ENCODE measurements at regions of chr6 and their contacts with region 1.

Region 1: GRCh38 chr6:116561377-116562018 is 7.9 kb downstream of the CALHM4 start:
- DNase-seq: peak; percentile 70
- H3K4me3 ChIP-seq: no peak overlapping the region
- H3K27ac ChIP-seq: no peak overlapping the region
- H3K4me1 ChIP-seq: no peaks in the 10 kb centered on the region
- H3K27me3 ChIP-seq: no peaks in the 10 kb centered on the region
- CTCF ChIP-seq: peak; percentile 83 to 91 (median 86)
- POLR2A ChIP-seq: no peak

Region 2: DNA sequence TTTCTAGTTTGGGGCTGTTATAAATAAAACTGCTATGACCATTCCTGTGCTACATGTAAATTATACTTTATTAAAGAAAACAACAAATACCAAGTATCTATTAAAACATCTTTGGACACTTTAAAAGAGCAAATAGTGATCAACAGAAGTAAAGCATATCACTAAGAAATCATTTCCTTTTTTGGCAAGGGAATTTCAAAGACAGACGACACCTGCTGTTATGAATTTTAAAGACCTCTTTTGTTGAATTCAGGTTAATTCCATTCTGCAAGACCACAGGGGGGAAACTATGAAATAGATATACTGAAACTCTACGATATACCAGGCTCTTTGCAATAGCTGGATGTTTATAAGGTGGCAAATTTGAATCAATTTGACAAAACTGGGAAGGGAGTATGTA is 289.3 kb before region 1 on chr6:
- intact Hi-C with region 1: loop called (anchors 5 kb)
- DNase-seq: no peak
- H3K4me3 ChIP-seq: no peak overlapping the region
- H3K27ac ChIP-seq: no peak overlapping the region
- H3K4me1 ChIP-seq: no peaks in the 10 kb centered on the region
- H3K27me3 ChIP-seq: no peaks in the 10 kb centered on the region
- CTCF ChIP-seq: no peak
- POLR2A ChIP-seq: no peak

Region 3: DNA sequence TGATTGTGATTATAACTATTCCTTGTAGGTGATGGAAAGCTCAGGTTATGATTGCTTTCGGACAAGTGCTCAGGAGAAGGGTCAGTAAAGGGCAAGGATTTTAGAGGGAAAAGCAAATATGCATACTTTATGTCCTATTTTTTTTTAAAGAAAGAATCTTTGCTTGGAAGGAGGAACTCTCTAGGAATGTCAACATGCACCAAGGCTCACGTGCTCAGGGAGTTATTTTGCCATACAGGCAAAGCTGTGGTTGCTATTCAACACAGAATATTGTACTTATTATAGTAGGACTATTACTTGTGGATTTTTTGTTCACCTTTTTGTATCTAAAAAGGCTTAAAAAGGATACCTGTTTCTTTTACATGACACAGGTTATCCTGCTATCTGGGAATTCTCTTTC is 278.8 kb before region 1 on chr6:
- intact Hi-C with region 1: no loop called
- DNase-seq: no peak
- H3K4me3 ChIP-seq: no peak overlapping the region
- H3K27ac ChIP-seq: no peak overlapping the region
- H3K4me1 ChIP-seq: peaks cover 7% of the 10 kb centered on the region
- H3K27me3 ChIP-seq: no peaks in the 10 kb centered on the region
- CTCF ChIP-seq: no peak
- POLR2A ChIP-seq: no peak

Region 4: DNA sequence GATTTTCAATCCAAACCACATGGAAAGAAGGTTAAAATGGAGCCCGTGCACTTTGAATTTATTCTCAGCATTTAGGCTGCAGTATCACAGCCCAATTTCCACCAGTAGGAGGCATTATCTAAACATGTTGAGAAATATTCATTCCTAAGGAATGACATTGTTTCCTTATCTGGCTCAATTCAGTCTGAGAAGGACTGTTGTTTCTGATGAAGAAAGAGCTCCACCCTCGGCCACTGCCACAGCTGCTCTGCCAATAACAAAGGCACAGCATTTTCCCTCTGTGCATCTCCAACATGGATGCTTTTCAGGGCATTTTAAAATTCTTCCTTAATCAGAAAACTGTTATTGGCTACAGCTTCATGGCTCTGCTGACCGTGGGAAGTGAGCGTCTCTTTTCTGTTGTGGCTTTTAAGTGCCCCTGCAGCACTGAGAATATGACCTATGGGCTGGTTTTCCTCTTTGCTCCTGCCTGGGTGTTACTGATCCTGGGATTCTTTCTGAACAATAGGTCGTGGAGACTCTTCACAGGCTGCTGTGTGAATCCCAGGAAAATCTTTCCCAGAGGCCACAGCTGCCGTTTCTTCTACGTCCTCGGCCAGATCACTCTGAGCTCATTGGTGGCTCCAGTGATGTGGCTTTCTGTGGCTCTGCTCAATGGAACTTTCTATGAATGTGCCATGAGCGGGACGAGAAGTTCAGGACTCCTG is 49.9 kb before region 1 on chr6 and contains the start of gene CALHM5:
- intact Hi-C with region 1: loop called (anchors 10 kb)
- DNase-seq: no peak
- H3K4me3 ChIP-seq: peak within 1 kb of the TSS; percentile 11 to 18
- H3K27ac ChIP-seq: peak within 1 kb of the TSS; percentile 51 to 67
- H3K4me1 ChIP-seq: no peaks in the 10 kb centered on the region
- H3K27me3 ChIP-seq: no peaks in the 10 kb centered on the region
- CTCF ChIP-seq: peak in 3 of 4 experiments; percentile 28 to 38 (median 36)
- POLR2A ChIP-seq: no peak
- total RNA-seq, gene CALHM5: 0.32 to 1.8 TPM

Region 5: DNA sequence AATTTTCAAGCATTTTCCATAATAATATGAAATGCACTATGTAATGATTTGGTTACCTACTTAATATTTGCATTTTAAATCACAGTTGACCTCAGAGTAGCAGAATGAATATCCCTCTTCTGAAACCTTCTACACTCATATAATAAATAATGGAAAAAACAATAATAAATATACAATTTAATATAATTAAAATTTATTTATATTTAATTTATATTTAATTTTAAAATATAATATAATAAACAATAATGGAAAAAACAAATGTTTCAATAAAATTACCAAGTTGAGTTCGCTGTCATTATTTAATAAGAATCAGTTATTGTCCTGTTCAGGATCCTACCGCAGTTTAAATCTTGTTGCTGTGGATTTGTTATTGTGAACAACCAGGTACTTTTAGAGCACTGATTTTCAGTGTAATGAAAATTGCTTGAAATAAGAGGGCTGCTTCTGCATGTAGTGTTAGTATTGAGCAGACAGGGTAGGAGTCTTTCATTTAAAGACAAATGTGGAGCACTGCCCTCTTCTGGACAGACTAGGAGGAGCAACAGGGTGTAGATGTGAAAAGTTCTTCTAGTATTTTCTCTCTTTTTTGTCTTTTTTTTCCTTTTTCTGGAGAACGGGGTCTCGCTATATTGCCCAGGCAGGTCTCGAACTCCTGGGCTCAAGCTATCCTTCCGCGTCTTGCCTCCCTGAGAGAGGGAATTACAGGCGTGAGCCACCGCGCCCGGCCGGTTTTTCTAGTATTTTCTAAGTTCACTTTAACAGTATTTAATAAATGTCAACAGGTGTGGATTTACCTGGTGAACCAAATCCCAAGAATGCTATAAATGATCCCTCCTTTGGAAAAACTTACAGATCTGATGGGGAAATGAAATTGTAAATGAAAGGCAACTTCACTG is 29.6 kb before region 1 on chr6:
- intact Hi-C with region 1: loop called (anchors 2 kb)
- DNase-seq: peak; percentile 13
- H3K4me3 ChIP-seq: no peak overlapping the region
- H3K27ac ChIP-seq: no peak overlapping the region
- H3K4me1 ChIP-seq: no peaks in the 10 kb centered on the region
- H3K27me3 ChIP-seq: no peaks in the 10 kb centered on the region
- CTCF ChIP-seq: peak; percentile 31 to 65 (median 52)
- POLR2A ChIP-seq: no peak

Region 6: GRCh38 chr6:116662202-116662601 is 100.7 kb after region 1 on chr6:
- intact Hi-C with region 1: no loop called
- DNase-seq: no peak
- H3K4me3 ChIP-seq: no peak overlapping the region
- H3K27ac ChIP-seq: no peak overlapping the region
- H3K4me1 ChIP-seq: no peaks in the 10 kb centered on the region
- H3K27me3 ChIP-seq: no peaks in the 10 kb centered on the region
- CTCF ChIP-seq: no peak
- POLR2A ChIP-seq: no peak

Region 7: GRCh38 chr6:116797585-116797984 is 236.1 kb after region 1 on chr6:
- intact Hi-C with region 1: no loop called
- DNase-seq: no peak
- H3K4me3 ChIP-seq: no peak overlapping the region
- H3K27ac ChIP-seq: no peak overlapping the region
- H3K4me1 ChIP-seq: no peaks in the 10 kb centered on the region
- H3K27me3 ChIP-seq: no peaks in the 10 kb centered on the region
- CTCF ChIP-seq: no peak
- POLR2A ChIP-seq: no peak

Region 8: GRCh38 chr6:117143647-117144046 is 582.1 kb after region 1 on chr6:
- intact Hi-C with region 1: no loop called
- DNase-seq: no peak
- H3K4me3 ChIP-seq: no peak overlapping the region
- H3K27ac ChIP-seq: no peak overlapping the region
- H3K4me1 ChIP-seq: no peaks in the 10 kb centered on the region
- H3K27me3 ChIP-seq: peaks cover 4% of the 10 kb centered on the region
- CTCF ChIP-seq: no peak
- POLR2A ChIP-seq: no peak

Measured in prostate gland (tissue), 2 donors.